ENCODE measurements at regions of chr5 and their contacts with region 1.

Region 1: DNA sequence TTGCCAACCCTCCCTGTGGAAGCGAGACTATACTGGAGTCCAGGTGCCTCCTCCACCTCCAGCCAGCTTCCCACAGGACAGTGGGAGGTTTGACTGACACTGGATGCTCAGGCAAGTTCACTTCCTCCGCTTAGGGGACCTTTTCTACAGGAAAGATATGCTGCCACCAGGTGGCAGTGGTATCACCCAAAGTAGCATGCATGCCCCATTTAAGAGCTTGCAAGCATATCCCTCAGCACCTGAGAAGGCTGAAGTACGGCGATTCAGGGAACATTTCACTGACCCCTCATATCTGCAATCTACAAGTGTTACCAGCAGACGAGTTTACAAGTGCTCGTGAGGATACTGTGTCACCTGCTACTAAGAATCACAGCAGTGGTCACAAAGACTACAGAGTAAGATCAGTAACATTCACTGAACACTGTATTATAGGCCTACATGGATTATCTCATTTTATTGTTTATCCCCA is 75.5 kb downstream of the KLHL3 start:
- DNase-seq: peak; percentile 40
- ATAC-seq: peak; percentile 100
- H3K4me3 ChIP-seq: no peak overlapping the region
- H3K27ac ChIP-seq: no peak overlapping the region
- H3K4me1 ChIP-seq: no peaks in the 10 kb centered on the region
- H3K27me3 ChIP-seq: no peaks in the 10 kb centered on the region
- CTCF ChIP-seq: peak; percentile 76 to 84 (median 83)
- EP300 ChIP-seq: no peak
- POLR2A ChIP-seq: no peak
- RAD21 ChIP-seq: peak; percentile 85

Region 2: GRCh38 chr5:137605411-137605810 is 55.0 kb before region 1 on chr5:
- CTCF ChIA-PET with region 1: no interaction called
- POLR2A ChIA-PET with region 1: no interaction called
- RAD21 ChIA-PET with region 1: no interaction called
- SMC1A ChIA-PET with region 1: no interaction called
- in situ Hi-C with region 1: no loop called
- intact Hi-C with region 1: no loop called
- DNase-seq: no peak
- ATAC-seq: no peak; the same call in 2 of the 3 replicates
- H3K4me3 ChIP-seq: no peak overlapping the region
- H3K27ac ChIP-seq: no peak overlapping the region
- H3K4me1 ChIP-seq: no peaks in the 10 kb centered on the region
- H3K27me3 ChIP-seq: peaks cover 1 to 10% of the 10 kb centered on the region in 2 experiments; a peak in 3 of 4 replicates
- CTCF ChIP-seq: no peak
- EP300 ChIP-seq: no peak
- POLR2A ChIP-seq: no peak
- RAD21 ChIP-seq: no peak

Region 3: DNA sequence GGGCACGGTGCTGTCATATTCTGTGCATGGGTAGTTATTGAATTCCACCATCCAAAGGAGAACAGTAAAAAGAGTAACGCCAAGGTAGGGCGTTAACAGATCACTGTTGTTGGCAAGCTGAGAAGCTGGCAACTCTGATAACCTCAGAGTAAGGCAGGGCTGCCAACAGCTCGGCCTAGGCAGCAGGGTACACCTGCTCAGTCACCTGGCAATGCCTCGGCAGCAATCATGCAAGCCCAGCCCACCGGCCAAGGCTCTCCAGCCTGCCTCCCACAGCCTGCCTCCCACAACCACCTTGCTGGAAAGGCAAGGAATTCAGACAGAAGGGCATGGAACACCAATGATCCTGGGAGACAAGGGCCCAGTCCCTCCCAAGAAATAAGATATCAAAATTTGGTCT is 11.6 kb after region 1 on chr5:
- CTCF ChIA-PET with region 1: interaction called, 39 read pairs
- POLR2A ChIA-PET with region 1: no interaction called
- RAD21 ChIA-PET with region 1: interaction called, 5 read pairs
- SMC1A ChIA-PET with region 1: interaction called, 8 read pairs
- in situ Hi-C with region 1: no loop called
- intact Hi-C with region 1: no loop called
- DNase-seq: no peak
- ATAC-seq: no peak
- H3K4me3 ChIP-seq: no peak overlapping the region
- H3K27ac ChIP-seq: no peak overlapping the region
- H3K4me1 ChIP-seq: 0 out of 2 replicates have a peak, but pooled peaks cover under 1% of the 10 kb centered on the region
- H3K27me3 ChIP-seq: no peaks in the 10 kb centered on the region
- CTCF ChIP-seq: no peak
- EP300 ChIP-seq: no peak
- POLR2A ChIP-seq: no peak
- RAD21 ChIP-seq: no peak

Region 4: DNA sequence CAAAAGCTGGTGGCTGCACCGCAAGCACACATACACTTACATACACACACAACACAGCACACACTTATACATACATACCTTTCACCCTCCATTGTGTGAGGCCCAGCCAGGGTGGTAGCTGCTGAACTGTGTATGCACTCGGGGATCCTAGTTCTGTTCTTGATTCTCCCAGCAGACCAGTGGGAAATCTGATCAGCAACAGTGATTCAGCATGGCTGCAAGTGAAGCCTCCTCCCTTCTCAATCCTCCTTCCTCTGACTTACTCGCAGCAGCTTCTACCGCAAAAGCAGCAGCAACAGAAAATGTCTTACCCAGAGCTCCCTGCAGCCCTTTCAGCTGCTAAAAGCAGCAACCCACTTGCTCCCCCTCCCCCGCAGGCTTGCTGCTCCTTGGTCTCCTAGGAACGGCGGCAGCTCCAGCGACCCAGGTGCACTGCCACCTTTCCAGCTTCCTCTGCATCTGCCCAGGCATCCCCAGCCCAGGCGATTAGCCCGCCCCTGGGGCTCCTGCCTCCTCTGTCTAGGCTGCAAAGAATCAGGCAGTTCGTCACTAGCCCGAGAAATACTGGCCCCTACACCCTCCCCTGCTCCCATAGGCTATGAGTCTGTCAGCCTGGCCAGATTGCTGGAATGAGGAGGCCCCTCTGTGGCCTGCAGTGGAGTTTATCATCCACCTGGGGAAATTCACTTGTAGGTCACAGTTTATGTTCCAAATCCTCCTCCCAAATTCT is 75.3 kb after region 1 on chr5 and contains the start of gene KLHL3:
- CTCF ChIA-PET with region 1: interaction called, 619 read pairs
- POLR2A ChIA-PET with region 1: interaction called, 3 read pairs
- RAD21 ChIA-PET with region 1: interaction called, 168 read pairs
- SMC1A ChIA-PET with region 1: interaction called, 155 read pairs
- in situ Hi-C with region 1: loop called (anchors 5 kb)
- intact Hi-C with region 1: no loop called
- DNase-seq: no peak
- ATAC-seq: peak; percentile 74
- H3K4me3 ChIP-seq: peak within 1 kb of the TSS; percentile 61
- H3K27ac ChIP-seq: peak within 1 kb of the TSS; percentile 86
- H3K4me1 ChIP-seq: peaks cover 15% of the 10 kb centered on the region
- H3K27me3 ChIP-seq: no peaks in the 10 kb centered on the region
- CTCF ChIP-seq: peak; percentile 7 to 44 (median 17); a peak in 3 of 6 replicates
- EP300 ChIP-seq: no peak
- POLR2A ChIP-seq: peak; percentile 52
- RAD21 ChIP-seq: peak; percentile 69
- polyA plus RNA-seq, gene KLHL3: 1.7 to 2.3 TPM

Region 5: GRCh38 chr5:137822158-137822764 is 161.9 kb after region 1 on chr5:
- CTCF ChIA-PET with region 1: interaction called, 8 read pairs
- POLR2A ChIA-PET with region 1: no interaction called
- RAD21 ChIA-PET with region 1: interaction called, 3 read pairs
- SMC1A ChIA-PET with region 1: no interaction called
- in situ Hi-C with region 1: no loop called
- intact Hi-C with region 1: loop called (anchors 2 kb)
- DNase-seq: no peak
- ATAC-seq: peak; percentile 84
- H3K4me3 ChIP-seq: no peak overlapping the region
- H3K27ac ChIP-seq: no peak overlapping the region
- H3K4me1 ChIP-seq: no peaks in the 10 kb centered on the region
- H3K27me3 ChIP-seq: no peaks in the 10 kb centered on the region
- CTCF ChIP-seq: peak; percentile 26 to 56 (median 46); a peak in 5 of 6 replicates
- EP300 ChIP-seq: no peak
- POLR2A ChIP-seq: no peak
- RAD21 ChIP-seq: peak; percentile 70

Measured in GM12878 (cell line).